A549 (cell line): ENCODE measurements at regions of chr11 and their contacts with region 1.

Region 1: DNA sequence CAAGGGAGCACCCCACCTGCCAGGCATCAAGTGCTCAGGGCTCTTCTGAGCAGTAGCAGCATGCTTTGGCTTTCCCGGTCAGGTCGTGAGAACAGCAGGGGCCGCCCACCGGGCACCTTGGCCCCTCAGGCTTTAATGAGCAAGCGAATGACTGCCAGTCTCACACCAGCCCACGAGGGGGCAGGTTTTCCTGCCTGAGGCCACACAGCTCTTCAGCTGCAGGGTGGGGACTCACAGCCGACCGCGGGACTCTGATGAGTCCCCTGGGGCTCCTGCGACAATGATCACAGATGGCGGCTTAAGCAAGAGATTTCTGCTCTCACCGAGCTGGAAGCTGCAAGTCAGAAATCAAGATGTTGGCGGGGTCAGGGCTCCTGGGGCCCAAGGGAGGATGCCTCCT is 14.3 kb upstream of the FGF19 start:
- DNase-seq: peak; percentile 38 to 60
- ATAC-seq: peak; percentile 48 to 85; a peak in 4 of 6 replicates
- H3K4me3 ChIP-seq: no peak overlapping the region
- H3K27ac ChIP-seq: no peak overlapping the region
- H3K4me1 ChIP-seq: no peaks in the 10 kb centered on the region
- CTCF ChIP-seq: peak; percentile 43
- EP300 ChIP-seq: no peak
- POLR2A ChIP-seq: no peak
- RAD21 ChIP-seq: peak; percentile 42 to 51; a peak in 4 of 5 replicates

Region 2: GRCh38 chr11:69881449-69882269 is 163.5 kb after region 1 on chr11:
- CTCF ChIA-PET with region 1: interaction called, 10 read pairs
- POLR2A ChIA-PET with region 1: no interaction called
- DNase-seq: no peak
- ATAC-seq: peak; percentile 5 to 61; a peak in 3 of 6 replicates
- H3K4me3 ChIP-seq: no peak overlapping the region
- H3K27ac ChIP-seq: no peak overlapping the region
- H3K4me1 ChIP-seq: no peaks in the 10 kb centered on the region
- CTCF ChIP-seq: 0 out of 3 replicates have a peak, but pooled peaks have one; percentile 12
- EP300 ChIP-seq: no peak
- POLR2A ChIP-seq: no peak
- RAD21 ChIP-seq: no peak